ENCODE measurements at regions of chrX and their contacts with region 1.

Region 1: GRCh38 chrX:48574270-48575266 is at the start of gene RBM3:
- DNase-seq: peak; percentile 95
- H3K4me3 Mint-ChIP-seq: peak within 1 kb of the TSS; percentile 96
- H3K27ac Mint-ChIP-seq: peak within 1 kb of the TSS; percentile 99
- H3K4me1 Mint-ChIP-seq: peaks cover 32% of the 10 kb centered on the region
- H3K27me3 Mint-ChIP-seq: no peaks in the 10 kb centered on the region
- total RNA-seq, gene RBM3: 139 to 143 TPM

Region 2: GRCh38 chrX:48083212-48083611 is 491.4 kb before region 1 on chrX:
- CTCF ChIA-PET with region 1: no interaction called
- intact Hi-C with region 1: loop called (anchors 10 kb)
- DNase-seq: peak; percentile 68
- H3K4me3 Mint-ChIP-seq: no peak overlapping the region
- H3K27ac Mint-ChIP-seq: no peak overlapping the region
- H3K4me1 Mint-ChIP-seq: no peaks in the 10 kb centered on the region
- H3K27me3 Mint-ChIP-seq: no peaks in the 10 kb centered on the region

Region 3: GRCh38 chrX:48475774-48476577 is 98.6 kb before region 1 on chrX and contains the start of gene FTSJ1:
- CTCF ChIA-PET with region 1: no interaction called
- intact Hi-C with region 1: loop called (anchors 1 kb)
- DNase-seq: peak; percentile 86
- H3K4me3 Mint-ChIP-seq: peak within 1 kb of the TSS; percentile 76
- H3K27ac Mint-ChIP-seq: peak within 1 kb of the TSS; percentile 90
- H3K4me1 Mint-ChIP-seq: peaks cover 32% of the 10 kb centered on the region
- H3K27me3 Mint-ChIP-seq: no peaks in the 10 kb centered on the region
- total RNA-seq, gene FTSJ1: 66.2 to 66.8 TPM

Region 4: GRCh38 chrX:48508400-48509244 is 65.9 kb before region 1 on chrX and contains the start of gene PORCN:
- CTCF ChIA-PET with region 1: no interaction called
- intact Hi-C with region 1: no loop called
- DNase-seq: peak; percentile 77
- H3K4me3 Mint-ChIP-seq: peak within 1 kb of the TSS; percentile 78
- H3K27ac Mint-ChIP-seq: peak within 1 kb of the TSS; percentile 66
- H3K4me1 Mint-ChIP-seq: peaks cover 13% of the 10 kb centered on the region
- H3K27me3 Mint-ChIP-seq: no peaks in the 10 kb centered on the region
- total RNA-seq, gene PORCN: 5.2 to 5.6 TPM

Region 5: DNA sequence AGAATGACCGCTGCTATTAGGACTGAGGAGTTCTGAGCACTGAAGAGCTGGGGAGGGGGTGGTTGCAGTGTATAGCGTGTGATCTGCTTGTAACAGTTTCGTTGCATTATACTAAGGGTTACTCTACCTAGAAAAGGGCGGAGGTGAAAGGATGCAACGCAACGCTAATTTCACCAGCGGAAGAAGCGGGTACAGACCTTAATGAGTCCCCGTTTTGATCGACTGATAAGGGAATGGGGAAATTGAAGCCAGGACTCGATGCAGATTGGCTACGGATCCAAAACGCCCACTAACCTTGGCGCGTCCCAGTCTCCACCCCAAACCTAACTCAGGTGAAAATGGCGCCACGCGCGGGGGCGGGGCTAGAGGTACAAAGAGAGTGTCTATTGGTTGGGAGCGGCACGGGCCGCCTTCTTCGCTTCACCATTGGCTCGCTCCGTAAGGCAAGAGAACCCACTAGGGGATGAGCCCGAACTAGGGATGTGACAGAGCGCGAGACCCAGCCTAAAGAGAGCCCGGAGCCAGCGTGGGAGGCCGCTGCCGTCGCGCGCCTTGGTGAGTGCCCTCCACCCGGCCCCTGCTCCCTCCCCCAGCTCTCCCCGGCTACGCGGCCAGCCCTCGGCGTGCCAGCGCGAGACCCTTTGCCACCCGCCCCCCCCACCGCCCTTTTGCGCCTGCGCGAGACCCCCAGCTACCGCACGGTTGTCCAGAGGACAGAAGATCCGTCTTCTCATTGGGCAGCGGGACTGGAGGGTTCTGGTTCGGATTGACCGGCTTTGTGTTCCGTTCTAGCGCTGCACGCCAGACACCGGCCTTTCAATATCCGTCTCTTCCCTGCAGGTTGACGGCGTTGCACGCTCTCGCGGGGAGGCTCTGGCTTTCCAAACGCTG is 53.0 kb before region 1 on chrX and contains the start of gene EBP:
- CTCF ChIA-PET with region 1: no interaction called
- intact Hi-C with region 1: loop called (anchors 1 kb)
- DNase-seq: peak; percentile 98
- H3K4me3 Mint-ChIP-seq: peak within 1 kb of the TSS; percentile 90
- H3K27ac Mint-ChIP-seq: peak within 1 kb of the TSS; percentile 98
- H3K4me1 Mint-ChIP-seq: peaks cover 25% of the 10 kb centered on the region
- H3K27me3 Mint-ChIP-seq: no peaks in the 10 kb centered on the region
- total RNA-seq, gene EBP: 118 to 123 TPM

Region 6: DNA sequence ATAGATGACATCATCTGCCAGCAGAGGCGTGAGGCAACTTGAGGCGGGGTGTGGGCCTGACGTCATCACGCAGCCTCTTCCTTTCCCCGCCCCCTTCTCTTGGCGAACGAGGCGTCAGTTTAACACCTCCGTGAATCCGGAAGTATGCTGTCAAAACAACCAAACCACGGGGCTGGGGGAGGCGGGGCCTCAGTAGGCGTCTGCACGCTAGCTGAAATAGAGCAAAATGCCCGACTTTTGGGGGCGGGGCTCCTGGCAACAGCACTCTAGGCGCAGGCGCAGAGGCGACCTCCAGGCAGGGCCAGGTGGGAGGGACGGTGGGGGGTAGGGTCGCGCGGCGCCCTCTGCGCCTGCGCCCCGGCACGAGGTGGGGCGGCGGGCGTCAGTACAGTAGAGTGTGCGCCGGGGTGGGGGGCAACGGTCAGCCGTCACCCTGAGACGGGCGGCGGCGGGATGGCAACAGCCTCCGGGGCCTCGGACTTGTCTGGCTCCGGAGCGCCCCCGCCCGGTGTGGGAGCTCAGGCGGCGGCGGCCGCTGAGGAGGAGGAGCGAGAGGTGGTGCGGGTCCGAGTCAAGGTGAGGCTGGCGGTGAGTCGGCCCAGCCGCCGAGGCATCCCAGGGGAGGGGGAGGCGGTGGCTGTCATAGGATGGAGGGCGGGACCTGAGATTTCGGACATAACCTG is 35.1 kb before region 1 on chrX and contains the start of gene TBC1D25:
- CTCF ChIA-PET with region 1: no interaction called
- intact Hi-C with region 1: loop called (anchors 1 kb)
- DNase-seq: peak; percentile 98
- H3K4me3 Mint-ChIP-seq: peak within 1 kb of the TSS; percentile 88
- H3K27ac Mint-ChIP-seq: peak within 1 kb of the TSS; percentile 93
- H3K4me1 Mint-ChIP-seq: peaks cover 12% of the 10 kb centered on the region
- H3K27me3 Mint-ChIP-seq: no peaks in the 10 kb centered on the region
- total RNA-seq, gene TBC1D25: 10.6 to 11.1 TPM

Region 7: GRCh38 chrX:48558271-48558670 is 16.3 kb before region 1 on chrX:
- CTCF ChIA-PET with region 1: no interaction called
- intact Hi-C with region 1: loop called (anchors 1 kb)
- DNase-seq: peak; percentile 28
- H3K4me3 Mint-ChIP-seq: no peak overlapping the region
- H3K27ac Mint-ChIP-seq: peak overlapping the region; percentile 78
- H3K4me1 Mint-ChIP-seq: peaks cover 3% of the 10 kb centered on the region
- H3K27me3 Mint-ChIP-seq: no peaks in the 10 kb centered on the region

Region 8: GRCh38 chrX:48665991-48666390 is 91.4 kb after region 1 on chrX:
- CTCF ChIA-PET with region 1: no interaction called
- intact Hi-C with region 1: no loop called
- DNase-seq: no peak
- H3K4me3 Mint-ChIP-seq: no peak overlapping the region
- H3K27ac Mint-ChIP-seq: no peak overlapping the region
- H3K4me1 Mint-ChIP-seq: peaks cover 2% of the 10 kb centered on the region
- H3K27me3 Mint-ChIP-seq: no peaks in the 10 kb centered on the region